B cell (primary cell): ENCODE measurements at regions of chr4 and their contacts with region 1.

Region 1: GRCh38 chr4:17817020-17817419 is 6.2 kb downstream of the NCAPG start:
- DNase-seq: peak; percentile 65
- ATAC-seq: peak; percentile 70
- H3K4me3 ChIP-seq: no peak overlapping the region
- H3K4me3 Mint-ChIP-seq: no peak overlapping the region
- H3K27ac ChIP-seq: no peak overlapping the region
- H3K27ac Mint-ChIP-seq: no peak overlapping the region
- H3K4me1 ChIP-seq: no peaks in the 10 kb centered on the region
- H3K4me1 Mint-ChIP-seq: peaks cover 8% of the 10 kb centered on the region
- H3K27me3 ChIP-seq: no peaks in the 10 kb centered on the region
- H3K27me3 Mint-ChIP-seq: no peaks in the 10 kb centered on the region
- CTCF ChIP-seq: peak; percentile 74

Region 2: DNA sequence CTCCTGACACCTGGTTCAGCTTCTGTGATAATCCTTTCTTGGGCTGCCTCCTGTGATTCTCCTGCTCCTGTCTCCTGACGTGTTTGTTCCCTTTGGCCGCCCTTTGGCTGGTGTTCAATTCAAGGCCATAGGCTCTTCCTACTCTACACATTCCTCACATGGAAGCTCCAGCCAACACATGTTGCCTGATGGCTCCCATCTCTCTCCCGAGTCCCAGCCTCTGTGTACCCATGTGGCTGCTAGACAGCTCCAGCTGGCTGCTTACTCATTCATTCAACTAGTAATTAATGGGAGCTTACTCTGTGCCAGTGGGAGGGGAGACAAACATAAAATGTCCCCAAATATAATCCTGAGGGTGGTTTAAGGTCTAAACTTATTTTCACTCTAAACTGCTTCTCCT is 211.8 kb before region 1 on chr4:
- CTCF ChIA-PET with region 1: interaction called, 12 read pairs
- POLR2A ChIA-PET with region 1: no interaction called
- intact Hi-C with region 1: no loop called
- DNase-seq: no peak
- ATAC-seq: no peak
- H3K4me3 ChIP-seq: no peak overlapping the region
- H3K4me3 Mint-ChIP-seq: no peak overlapping the region
- H3K27ac ChIP-seq: no peak overlapping the region
- H3K27ac Mint-ChIP-seq: no peak overlapping the region
- H3K4me1 ChIP-seq: no peaks in the 10 kb centered on the region
- H3K4me1 Mint-ChIP-seq: no peaks in the 10 kb centered on the region
- H3K27me3 ChIP-seq: no peaks in the 10 kb centered on the region
- H3K27me3 Mint-ChIP-seq: no peaks in the 10 kb centered on the region
- CTCF ChIP-seq: no peak

Region 3: GRCh38 chr4:18366892-18367291 is 549.9 kb after region 1 on chr4:
- CTCF ChIA-PET with region 1: interaction called, 21 read pairs
- POLR2A ChIA-PET with region 1: no interaction called
- intact Hi-C with region 1: no loop called
- DNase-seq: peak; percentile 31
- ATAC-seq: peak; percentile 41
- H3K4me3 ChIP-seq: no peak overlapping the region
- H3K4me3 Mint-ChIP-seq: no peak overlapping the region
- H3K27ac ChIP-seq: no peak overlapping the region
- H3K27ac Mint-ChIP-seq: no peak overlapping the region
- H3K4me1 ChIP-seq: no peaks in the 10 kb centered on the region
- H3K4me1 Mint-ChIP-seq: no peaks in the 10 kb centered on the region
- H3K27me3 ChIP-seq: no peaks in the 10 kb centered on the region
- H3K27me3 Mint-ChIP-seq: no peaks in the 10 kb centered on the region
- CTCF ChIP-seq: no peak

Region 4: GRCh38 chr4:18593445-18594002 is 776.5 kb after region 1 on chr4:
- CTCF ChIA-PET with region 1: interaction called, 44 read pairs
- POLR2A ChIA-PET with region 1: no interaction called
- intact Hi-C with region 1: no loop called
- DNase-seq: peak; percentile 70
- ATAC-seq: peak; percentile 49
- H3K4me3 ChIP-seq: no peak overlapping the region
- H3K4me3 Mint-ChIP-seq: no peak overlapping the region
- H3K27ac ChIP-seq: no peak overlapping the region
- H3K27ac Mint-ChIP-seq: no peak overlapping the region
- H3K4me1 ChIP-seq: no peaks in the 10 kb centered on the region
- H3K4me1 Mint-ChIP-seq: peaks cover 3% of the 10 kb centered on the region
- H3K27me3 ChIP-seq: no peaks in the 10 kb centered on the region
- H3K27me3 Mint-ChIP-seq: peaks cover 17% of the 10 kb centered on the region
- CTCF ChIP-seq: peak; percentile 89